ENCODE measurements at regions of chr12 and their contacts with region 1.

Region 1: GRCh38 chr12:47216150-47216677 is 136.5 kb upstream of the AMIGO2 start:
- DNase-seq: peak; percentile 74
- ATAC-seq: peak; percentile 55
- H3K4me3 Mint-ChIP-seq: peak overlapping the region; percentile 87
- H3K27ac Mint-ChIP-seq: peak overlapping the region; percentile 92
- H3K4me1 Mint-ChIP-seq: peaks cover 35% of the 10 kb centered on the region
- H3K27me3 Mint-ChIP-seq: peaks cover 1% of the 10 kb centered on the region

Region 2: GRCh38 chr12:47236109-47236714 is 20.0 kb after region 1 on chr12:
- POLR2A ChIA-PET with region 1: interaction called, 130 read pairs
- DNase-seq: no peak
- ATAC-seq: no peak
- H3K4me3 Mint-ChIP-seq: peak overlapping the region; percentile 37
- H3K27ac Mint-ChIP-seq: peak overlapping the region; percentile 13
- H3K4me1 Mint-ChIP-seq: peaks cover 42% of the 10 kb centered on the region
- H3K27me3 Mint-ChIP-seq: no peaks in the 10 kb centered on the region

Region 3: DNA sequence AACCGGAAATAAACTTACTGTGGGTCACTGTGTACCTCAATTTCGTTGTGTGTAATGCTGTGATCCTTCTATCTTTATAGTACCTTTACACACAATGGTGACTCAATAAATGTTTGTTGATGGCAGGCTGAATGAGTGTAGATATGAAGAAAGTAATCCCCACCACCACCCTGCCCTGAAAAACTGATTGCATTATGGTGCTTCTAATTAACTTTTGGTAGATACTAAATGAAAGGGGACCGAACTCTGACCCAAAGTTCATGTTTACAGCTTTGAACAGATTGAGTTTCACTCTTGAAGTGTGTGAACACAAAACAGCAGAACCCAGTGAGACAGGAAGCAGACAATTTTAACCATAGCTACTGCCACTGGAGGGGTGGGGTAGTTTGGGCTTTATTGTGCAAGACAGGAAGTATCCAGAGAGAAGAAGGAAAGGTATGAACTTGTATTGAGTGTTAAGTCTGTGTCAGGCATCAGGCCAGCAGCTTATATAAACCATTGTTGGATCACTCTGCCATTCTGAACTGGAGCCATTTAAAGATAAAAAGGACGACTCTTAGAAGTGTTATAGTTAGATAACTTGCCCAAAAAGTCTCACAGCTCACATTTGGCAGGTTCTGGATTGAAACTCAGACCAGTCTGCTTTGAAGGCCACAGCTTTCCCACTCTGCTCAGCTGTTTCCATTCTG is 60.6 kb after region 1 on chr12:
- POLR2A ChIA-PET with region 1: interaction called, 29 read pairs
- DNase-seq: no peak
- ATAC-seq: peak; percentile 96
- H3K4me3 Mint-ChIP-seq: peak overlapping the region; percentile 75
- H3K27ac Mint-ChIP-seq: peak overlapping the region; percentile 91
- H3K4me1 Mint-ChIP-seq: peaks cover 57% of the 10 kb centered on the region
- H3K27me3 Mint-ChIP-seq: no peaks in the 10 kb centered on the region

Region 4: GRCh38 chr12:47361389-47362021 is 145.3 kb after region 1 on chr12:
- POLR2A ChIA-PET with region 1: interaction called, 32 read pairs
- DNase-seq: peak; percentile 65
- ATAC-seq: peak; percentile 83
- H3K4me3 Mint-ChIP-seq: peak overlapping the region; percentile 83
- H3K27ac Mint-ChIP-seq: peak overlapping the region; percentile 95
- H3K4me1 Mint-ChIP-seq: peaks cover 44% of the 10 kb centered on the region
- H3K27me3 Mint-ChIP-seq: no peaks in the 10 kb centered on the region

Region 5: DNA sequence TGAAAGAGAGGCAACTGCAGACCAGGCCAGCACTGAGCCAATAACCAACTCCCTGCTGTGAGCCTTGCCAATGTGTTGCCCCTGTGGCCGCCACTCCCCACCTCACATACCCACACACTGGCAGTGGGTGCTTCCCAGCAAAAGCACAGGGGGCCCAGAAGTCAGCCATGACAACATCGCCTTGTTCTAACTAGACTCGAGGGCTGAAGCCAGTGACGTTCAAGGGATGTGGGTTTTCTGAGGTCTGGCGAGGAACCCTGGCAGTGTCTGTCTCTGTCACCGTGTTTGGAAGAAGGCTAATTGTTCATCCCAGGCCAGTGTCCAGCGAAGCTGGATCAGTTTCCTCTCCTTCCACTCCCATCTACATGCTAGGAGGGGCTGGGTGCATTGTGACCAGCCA is 175.4 kb after region 1 on chr12:
- POLR2A ChIA-PET with region 1: interaction called, 55 read pairs
- DNase-seq: peak; percentile 68
- ATAC-seq: peak; percentile 83
- H3K4me3 Mint-ChIP-seq: peak overlapping the region; percentile 73
- H3K27ac Mint-ChIP-seq: peak overlapping the region; percentile 100
- H3K4me1 Mint-ChIP-seq: peaks cover 65% of the 10 kb centered on the region
- H3K27me3 Mint-ChIP-seq: no peaks in the 10 kb centered on the region